CD8-positive, alpha-beta T cell (primary cell): ENCODE measurements at regions of chr6 and their contacts with region 1.

Region 1: GRCh38 chr6:135088818-135089809 is 34.5 kb upstream of the HBS1L start:
- DNase-seq: peak in 3 of 9 experiments; percentile 22 to 64 (median 57)
- ATAC-seq: peak; percentile 67
- H3K4me3 ChIP-seq: peak overlapping the region in 1 of 2 experiments; percentile 48
- H3K4me3 Mint-ChIP-seq: peak overlapping the region; percentile 73
- H3K27ac ChIP-seq: no peak overlapping the region
- H3K27ac Mint-ChIP-seq: peak overlapping the region; percentile 87
- H3K4me1 ChIP-seq: peaks cover 70% of the 10 kb centered on the region
- H3K4me1 Mint-ChIP-seq: peaks cover 79% of the 10 kb centered on the region
- H3K27me3 ChIP-seq: no peaks in the 10 kb centered on the region
- H3K27me3 Mint-ChIP-seq: no peaks in the 10 kb centered on the region
- CTCF ChIP-seq: peak; percentile 58

Region 2: GRCh38 chr6:134247231-134247833 is 841.8 kb before region 1 on chr6:
- CTCF ChIA-PET with region 1: no interaction called
- POLR2A ChIA-PET with region 1: no interaction called
- intact Hi-C with region 1: loop called (anchors 10 kb)
- DNase-seq: peak; percentile 47 to 96 (median 68)
- ATAC-seq: peak; percentile 87
- H3K4me3 ChIP-seq: no peak overlapping the region
- H3K4me3 Mint-ChIP-seq: peak overlapping the region; percentile 54
- H3K27ac ChIP-seq: peak overlapping the region; percentile 20 to 76
- H3K27ac Mint-ChIP-seq: peak overlapping the region; percentile 92
- H3K4me1 ChIP-seq: peaks cover 63% of the 10 kb centered on the region
- H3K4me1 Mint-ChIP-seq: peaks cover 61% of the 10 kb centered on the region
- H3K27me3 ChIP-seq: no peaks in the 10 kb centered on the region
- H3K27me3 Mint-ChIP-seq: no peaks in the 10 kb centered on the region
- CTCF ChIP-seq: no peak

Region 3: GRCh38 chr6:135054569-135055498 is 34.3 kb before region 1 on chr6 and contains the start of gene HBS1L:
- CTCF ChIA-PET with region 1: interaction called, 5 read pairs
- POLR2A ChIA-PET with region 1: interaction called, 26 read pairs
- intact Hi-C with region 1: loop called (anchors 1 kb)
- DNase-seq: peak; percentile 91 to 100 (median 96)
- ATAC-seq: peak; percentile 96
- H3K4me3 ChIP-seq: peak within 1 kb of the TSS; percentile 76 to 88
- H3K4me3 Mint-ChIP-seq: peak within 1 kb of the TSS; percentile 98
- H3K27ac ChIP-seq: peak within 1 kb of the TSS; percentile 87 to 90
- H3K27ac Mint-ChIP-seq: peak within 1 kb of the TSS; percentile 99
- H3K4me1 ChIP-seq: peaks cover 25% of the 10 kb centered on the region
- H3K4me1 Mint-ChIP-seq: peaks cover 42% of the 10 kb centered on the region
- H3K27me3 ChIP-seq: no peaks in the 10 kb centered on the region
- H3K27me3 Mint-ChIP-seq: no peaks in the 10 kb centered on the region
- CTCF ChIP-seq: no peak
- total RNA-seq, gene HBS1L: 119 to 123 TPM

Region 4: DNA sequence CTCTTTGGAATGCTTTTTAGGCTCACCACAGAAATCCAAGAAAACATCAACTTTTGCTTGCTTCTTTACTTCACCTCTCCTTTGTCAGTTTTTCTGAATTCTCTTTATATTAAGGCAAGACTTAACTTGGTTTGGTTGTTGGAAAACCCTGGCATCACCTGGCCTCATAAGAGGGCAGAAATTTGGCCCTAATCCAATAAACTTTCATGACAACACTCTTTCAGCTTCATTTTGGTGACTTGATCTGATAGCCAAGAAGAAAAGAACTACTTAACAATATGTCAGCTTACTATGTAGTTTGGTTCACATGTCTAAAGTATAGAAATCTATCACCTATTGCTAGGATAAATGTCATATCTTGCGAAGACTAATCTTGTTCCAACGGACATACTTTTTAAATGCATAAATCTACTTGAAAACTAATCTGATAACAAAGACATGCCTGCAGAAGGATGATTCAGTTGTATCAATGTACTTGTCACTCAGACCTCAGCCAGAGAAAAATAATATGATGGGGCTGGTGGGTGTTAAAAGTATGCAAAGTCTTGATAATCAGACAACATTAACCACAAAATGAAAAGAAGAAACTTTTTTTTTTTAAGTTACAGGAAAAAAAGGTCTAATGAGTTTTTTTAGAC is 15.2 kb before region 1 on chr6:
- CTCF ChIA-PET with region 1: interaction called, 5 read pairs
- POLR2A ChIA-PET with region 1: interaction called, 4 read pairs
- intact Hi-C with region 1: loop called in 1 of 2 experiments (anchors 2 kb)
- DNase-seq: no peak
- ATAC-seq: no peak
- H3K4me3 ChIP-seq: no peak overlapping the region
- H3K4me3 Mint-ChIP-seq: no peak overlapping the region
- H3K27ac ChIP-seq: no peak overlapping the region
- H3K27ac Mint-ChIP-seq: no peak overlapping the region
- H3K4me1 ChIP-seq: peaks cover 10% of the 10 kb centered on the region
- H3K4me1 Mint-ChIP-seq: peaks cover 20% of the 10 kb centered on the region
- H3K27me3 ChIP-seq: no peaks in the 10 kb centered on the region
- H3K27me3 Mint-ChIP-seq: no peaks in the 10 kb centered on the region
- CTCF ChIP-seq: no peak

Region 5: DNA sequence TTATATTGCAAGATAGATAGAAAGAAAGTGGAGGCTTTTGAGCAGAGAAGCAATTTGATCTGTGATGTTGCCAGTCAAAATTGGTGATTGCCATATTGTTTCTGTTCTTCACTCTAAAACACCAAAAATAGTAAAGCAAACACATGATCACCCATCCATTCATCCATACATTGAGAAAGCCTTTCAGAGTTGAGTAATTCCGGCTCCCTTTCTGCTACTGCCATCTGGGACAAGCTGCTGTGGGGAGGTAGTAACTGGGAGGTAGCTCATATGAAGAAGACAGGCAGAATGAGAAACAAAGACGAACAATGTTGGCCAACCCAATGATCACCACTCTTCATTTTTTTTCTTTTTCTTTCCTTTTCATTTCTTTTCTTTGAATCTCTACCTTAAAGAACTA is 16.6 kb after region 1 on chr6:
- CTCF ChIA-PET with region 1: interaction called, 20 read pairs
- POLR2A ChIA-PET with region 1: interaction called, 29 read pairs
- intact Hi-C with region 1: loop called in 1 of 2 experiments (anchors 1 kb)
- DNase-seq: no peak
- ATAC-seq: no peak
- H3K4me3 ChIP-seq: no peak overlapping the region
- H3K4me3 Mint-ChIP-seq: no peak overlapping the region
- H3K27ac ChIP-seq: no peak overlapping the region
- H3K27ac Mint-ChIP-seq: peak overlapping the region; percentile 86
- H3K4me1 ChIP-seq: peaks cover 39% of the 10 kb centered on the region
- H3K4me1 Mint-ChIP-seq: peaks cover 64% of the 10 kb centered on the region
- H3K27me3 ChIP-seq: no peaks in the 10 kb centered on the region
- H3K27me3 Mint-ChIP-seq: no peaks in the 10 kb centered on the region
- CTCF ChIP-seq: no peak

Region 6: DNA sequence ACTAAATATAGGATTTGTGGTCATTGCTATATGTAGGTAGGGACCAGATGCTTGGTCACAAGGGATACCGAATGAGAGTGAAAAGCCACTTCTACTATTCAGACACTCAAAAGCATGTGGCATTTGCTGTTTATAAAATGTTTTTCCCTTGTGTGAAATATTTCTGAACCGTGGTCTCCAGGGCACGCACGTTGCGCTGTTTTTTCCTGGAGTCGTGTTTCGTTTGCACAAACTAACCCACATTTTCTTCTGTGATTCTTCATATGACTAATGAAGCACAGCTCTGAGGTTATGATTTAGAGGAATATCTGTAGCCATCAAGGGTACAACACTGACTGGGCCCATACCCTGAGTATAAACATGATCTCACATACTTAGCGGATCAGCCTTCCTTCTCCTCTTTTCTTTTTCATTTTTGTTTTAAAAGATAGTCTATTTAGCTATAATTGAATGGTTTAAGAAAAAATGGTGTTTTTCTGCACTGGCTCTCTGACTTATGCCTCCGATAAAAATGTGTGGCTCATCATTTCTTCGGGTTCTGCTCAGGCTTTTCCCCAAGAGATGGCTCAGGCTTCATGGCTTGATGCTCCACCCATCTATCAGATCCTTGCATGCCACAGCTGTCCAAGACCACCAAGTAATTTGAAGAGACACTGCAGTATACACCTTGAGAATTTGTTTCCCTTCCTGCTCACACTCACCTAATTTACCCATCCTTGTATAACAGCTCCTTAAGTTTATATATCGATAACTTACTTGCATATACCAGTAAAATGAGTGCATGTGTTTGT is 25.4 kb after region 1 on chr6:
- CTCF ChIA-PET with region 1: interaction called, 5 read pairs
- POLR2A ChIA-PET with region 1: interaction called, 9 read pairs
- intact Hi-C with region 1: loop called in 1 of 2 experiments (anchors 1 kb)
- DNase-seq: no peak
- ATAC-seq: peak; percentile 35
- H3K4me3 ChIP-seq: no peak overlapping the region
- H3K4me3 Mint-ChIP-seq: no peak overlapping the region
- H3K27ac ChIP-seq: no peak overlapping the region
- H3K27ac Mint-ChIP-seq: peak overlapping the region; percentile 29
- H3K4me1 ChIP-seq: peaks cover 40% of the 10 kb centered on the region
- H3K4me1 Mint-ChIP-seq: peaks cover 64% of the 10 kb centered on the region
- H3K27me3 ChIP-seq: no peaks in the 10 kb centered on the region
- H3K27me3 Mint-ChIP-seq: no peaks in the 10 kb centered on the region
- CTCF ChIP-seq: no peak

Region 7: GRCh38 chr6:135128268-135128914 is 39.3 kb after region 1 on chr6:
- CTCF ChIA-PET with region 1: interaction called, 4 read pairs
- POLR2A ChIA-PET with region 1: interaction called, 4 read pairs
- intact Hi-C with region 1: loop called in 1 of 2 experiments (anchors 5 kb)
- DNase-seq: peak in 7 of 9 experiments; percentile 36 to 89 (median 54)
- ATAC-seq: peak; percentile 92
- H3K4me3 ChIP-seq: peak overlapping the region in 1 of 2 experiments; percentile 9
- H3K4me3 Mint-ChIP-seq: peak overlapping the region; percentile 59
- H3K27ac ChIP-seq: peak overlapping the region; percentile 25 to 81
- H3K27ac Mint-ChIP-seq: peak overlapping the region; percentile 95
- H3K4me1 ChIP-seq: peaks cover 25% of the 10 kb centered on the region
- H3K4me1 Mint-ChIP-seq: peaks cover 42% of the 10 kb centered on the region
- H3K27me3 ChIP-seq: no peaks in the 10 kb centered on the region
- H3K27me3 Mint-ChIP-seq: no peaks in the 10 kb centered on the region
- CTCF ChIP-seq: no peak